Activated CD4-positive, alpha-beta T cell treated with anti-CD3 and anti-CD28 coated beads for 36 hours (primary cell): ENCODE measurements at regions of chr19 and their contacts with region 1.

Region 1: DNA sequence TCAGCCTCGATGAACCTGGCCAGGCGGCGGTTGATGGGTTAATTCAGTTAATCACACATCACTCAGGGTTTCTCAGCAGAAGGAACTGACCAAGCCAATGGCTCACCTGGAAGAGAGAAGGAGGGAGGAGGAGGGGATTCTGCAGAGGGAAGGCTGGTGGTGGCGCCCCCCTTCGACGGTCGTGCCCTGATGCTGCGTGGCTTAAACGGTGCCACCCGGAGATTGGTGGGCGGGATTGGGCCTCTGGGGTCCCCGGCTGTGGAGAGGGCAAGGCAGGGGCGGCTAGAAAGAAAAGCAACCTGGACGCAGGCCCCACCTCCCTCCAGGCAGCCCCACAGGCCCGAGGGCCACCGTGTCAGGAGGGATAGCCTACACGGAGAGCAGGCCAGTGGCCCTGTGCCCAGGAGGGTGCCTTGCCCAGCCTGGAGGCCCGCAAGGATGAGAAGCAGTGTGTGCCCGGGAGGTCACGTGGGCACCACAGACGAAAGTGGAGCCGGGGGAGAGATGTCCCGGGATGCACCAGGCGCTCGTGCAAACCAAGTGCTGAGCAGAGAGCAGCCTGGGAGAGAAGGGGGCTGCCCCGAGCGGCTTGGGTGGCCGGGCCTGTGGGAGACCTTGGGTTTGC is 16.0 kb downstream of the CSNK1G2 start:
- DNase-seq: no peak
- ATAC-seq: no peak
- H3K4me3 Mint-ChIP-seq: no peak overlapping the region
- H3K27ac Mint-ChIP-seq: no peak overlapping the region
- H3K4me1 Mint-ChIP-seq: peaks cover 2% of the 10 kb centered on the region
- H3K27me3 Mint-ChIP-seq: no peaks in the 10 kb centered on the region

Region 2: DNA sequence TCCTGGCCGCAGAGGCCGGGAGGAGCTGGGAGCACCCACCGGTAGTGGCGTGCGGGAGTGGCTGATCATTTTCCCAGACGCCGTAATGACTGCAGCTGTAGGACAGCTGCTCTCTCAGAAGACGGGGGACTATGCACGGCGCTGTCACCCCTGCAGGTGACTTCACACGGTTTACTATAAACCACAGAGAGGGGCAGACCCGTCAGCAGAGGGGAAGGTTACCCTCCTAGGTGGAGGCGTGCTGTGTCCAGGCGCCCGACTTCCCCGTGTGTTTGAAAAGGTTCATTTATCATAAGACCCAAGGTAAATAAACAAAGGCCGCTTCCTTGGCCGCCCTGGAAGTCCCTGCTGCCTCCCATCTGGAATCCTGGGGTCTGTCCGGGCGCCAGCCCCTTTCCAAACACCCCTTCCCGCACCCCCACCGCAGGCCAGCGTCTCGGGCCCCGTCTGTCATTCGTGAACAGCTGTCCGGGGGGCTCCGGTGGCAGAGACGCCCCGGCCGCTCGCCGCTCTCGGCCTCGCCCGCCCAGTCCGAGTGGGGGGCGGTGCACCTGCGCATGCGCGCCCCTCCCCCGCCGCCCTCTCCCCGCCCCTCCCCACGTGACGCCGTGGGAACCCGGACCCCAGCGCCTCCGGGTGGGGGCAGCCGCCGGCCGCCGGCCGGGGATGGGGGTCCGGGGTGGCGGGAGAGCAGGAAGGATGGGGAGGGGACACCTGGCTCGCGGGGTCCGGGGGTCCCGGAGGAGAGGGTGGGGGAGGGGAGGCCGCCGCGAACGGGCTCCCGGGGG is 1497.1 kb before region 1 on chr19:
- CTCF ChIA-PET with region 1: no interaction called
- POLR2A ChIA-PET with region 1: no interaction called
- intact Hi-C with region 1: loop called in 1 of 2 experiments (anchors 10 kb)
- DNase-seq: peak; percentile 41
- ATAC-seq: peak; percentile 63
- H3K4me3 Mint-ChIP-seq: peak overlapping the region; percentile 45
- H3K27ac Mint-ChIP-seq: no peak overlapping the region
- H3K4me1 Mint-ChIP-seq: peaks cover 8% of the 10 kb centered on the region
- H3K27me3 Mint-ChIP-seq: peaks cover 14% of the 10 kb centered on the region